A549 (cell line): ENCODE measurements at regions of chr5 and their contacts with region 1.

Region 1: GRCh38 chr5:36270220-36270574 is 28.5 kb upstream of the NADK2 start:
- DNase-seq: no peak
- ATAC-seq: no peak
- H3K4me3 ChIP-seq: no peak overlapping the region
- H3K27ac ChIP-seq: no peak overlapping the region
- H3K4me1 ChIP-seq: no peaks in the 10 kb centered on the region
- CTCF ChIP-seq: no peak
- EP300 ChIP-seq: no peak
- POLR2A ChIP-seq: no peak
- RAD21 ChIP-seq: no peak

Region 2: DNA sequence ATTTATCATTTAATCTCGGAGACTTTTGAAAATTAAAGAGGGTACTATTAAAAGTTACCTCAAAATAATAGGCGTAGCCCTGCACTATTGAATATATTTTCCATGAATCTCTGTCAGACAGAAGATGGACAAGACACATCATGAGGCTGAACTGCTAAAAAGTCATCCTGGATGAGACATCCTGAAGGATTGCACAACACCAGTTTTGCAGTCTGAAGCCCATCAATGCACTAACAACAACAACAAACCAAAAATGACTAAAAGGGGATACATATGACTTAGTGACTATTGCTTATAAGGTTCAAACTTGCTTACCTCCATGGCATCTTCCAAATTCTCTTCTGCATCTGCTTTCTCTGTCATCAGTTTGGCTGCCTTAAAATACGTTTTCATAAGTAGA is 134.2 kb before region 1 on chr5:
- CTCF ChIA-PET with region 1: no interaction called
- POLR2A ChIA-PET with region 1: no interaction called
- DNase-seq: no peak
- ATAC-seq: no peak
- H3K4me3 ChIP-seq: no peak overlapping the region
- H3K27ac ChIP-seq: no peak overlapping the region
- H3K4me1 ChIP-seq: no peaks in the 10 kb centered on the region
- CTCF ChIP-seq: no peak
- EP300 ChIP-seq: no peak
- POLR2A ChIP-seq: no peak
- RAD21 ChIP-seq: no peak

Region 3: DNA sequence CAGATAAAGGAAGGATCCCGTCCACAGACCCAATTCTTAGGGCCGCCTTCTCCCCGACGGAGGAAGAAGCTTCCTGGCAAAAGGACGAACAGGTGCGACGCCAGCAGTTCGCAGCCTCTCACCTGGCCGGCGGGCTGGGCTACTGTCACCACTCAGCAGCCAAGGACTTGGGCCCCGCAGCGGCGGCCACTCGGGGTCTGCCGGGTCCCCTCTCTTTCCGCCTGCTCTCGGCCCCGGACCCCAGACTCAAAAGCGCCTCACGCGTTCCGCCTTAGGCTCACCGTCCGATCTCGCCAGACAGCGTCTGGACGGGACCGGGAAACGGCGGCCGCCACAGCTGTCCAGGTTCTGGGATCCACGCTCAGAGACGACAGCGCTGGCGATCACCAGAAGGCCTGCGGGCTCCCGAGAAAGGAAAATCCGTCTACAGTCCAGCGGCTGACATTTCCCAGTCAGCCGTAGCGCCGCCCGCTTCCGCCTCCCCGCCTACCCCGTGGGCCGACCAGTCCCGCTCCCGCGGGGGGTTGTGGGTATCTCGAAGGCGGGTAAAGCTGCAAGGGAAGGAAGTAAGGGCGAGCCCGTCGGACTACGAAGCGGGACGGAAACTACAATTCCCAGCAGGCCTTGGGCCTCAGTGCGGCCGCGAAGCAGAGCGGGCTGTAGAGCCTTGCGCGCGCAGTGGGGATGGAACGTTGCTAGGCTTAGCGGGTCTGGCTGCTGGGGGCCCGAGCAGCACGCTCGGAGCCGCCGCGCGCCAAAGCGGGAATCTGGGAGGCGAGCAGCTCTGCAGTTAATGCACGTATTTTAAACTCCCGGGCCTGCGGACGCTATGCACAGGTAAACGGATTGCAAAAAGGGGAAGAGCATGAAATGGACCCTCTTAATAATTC is 118.5 kb before region 1 on chr5 and contains the starts of genes LMBRD2 and SKP2:
- CTCF ChIA-PET with region 1: no interaction called
- POLR2A ChIA-PET with region 1: no interaction called
- DNase-seq: peak; percentile 95
- ATAC-seq: peak; percentile 98 to 99
- H3K4me3 ChIP-seq: peak within 1 kb of the TSS; percentile 78
- H3K27ac ChIP-seq: peak within 1 kb of the TSS; percentile 79 to 89
- H3K4me1 ChIP-seq: peaks cover 7% of the 10 kb centered on the region; the same call in 1 of the 3 replicates
- CTCF ChIP-seq: no peak
- EP300 ChIP-seq: no peak
- POLR2A ChIP-seq: peak; percentile 82
- RAD21 ChIP-seq: no peak
- polyA plus RNA-seq, gene LMBRD2: 5.4 and 6.8 TPM in 2 replicates
- polyA plus RNA-seq, gene SKP2: 13.7 and 23.4 TPM in 2 replicates

Region 4: DNA sequence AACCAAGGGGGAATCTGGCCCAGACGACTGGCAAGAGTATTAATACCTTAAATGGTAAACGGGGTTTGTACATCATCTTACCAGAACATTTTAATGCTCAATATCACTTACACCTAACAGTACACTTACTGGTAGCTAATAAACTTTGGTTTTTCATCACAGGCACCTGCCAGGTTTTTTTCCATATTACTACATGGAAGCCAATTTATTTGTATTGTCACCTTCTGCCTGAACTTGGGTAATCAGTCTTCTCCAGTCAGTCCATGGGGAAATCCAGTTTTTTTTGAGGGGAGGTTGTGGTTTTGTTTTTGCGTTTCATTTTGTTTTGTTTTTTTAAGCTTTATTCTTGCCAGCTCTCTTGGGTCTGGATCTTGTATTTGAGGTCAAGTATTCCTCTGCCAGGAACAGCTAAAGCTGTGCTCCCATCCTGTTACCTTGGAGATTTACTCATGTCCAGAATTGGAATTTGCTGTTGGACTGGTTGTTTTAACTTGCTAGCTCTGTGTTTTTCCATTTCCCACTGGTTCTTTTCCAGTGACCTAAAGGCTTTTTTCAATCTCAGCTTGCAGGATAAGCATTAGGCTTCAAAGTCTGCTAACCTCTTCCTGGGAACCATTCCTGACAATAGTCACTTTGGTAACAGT is 17.4 kb before region 1 on chr5:
- CTCF ChIA-PET with region 1: interaction called, 13 read pairs
- POLR2A ChIA-PET with region 1: no interaction called
- DNase-seq: no peak
- ATAC-seq: no peak
- H3K4me3 ChIP-seq: no peak overlapping the region
- H3K27ac ChIP-seq: no peak overlapping the region
- H3K4me1 ChIP-seq: no peaks in the 10 kb centered on the region
- CTCF ChIP-seq: no peak
- EP300 ChIP-seq: no peak
- POLR2A ChIP-seq: no peak
- RAD21 ChIP-seq: no peak

Region 5: DNA sequence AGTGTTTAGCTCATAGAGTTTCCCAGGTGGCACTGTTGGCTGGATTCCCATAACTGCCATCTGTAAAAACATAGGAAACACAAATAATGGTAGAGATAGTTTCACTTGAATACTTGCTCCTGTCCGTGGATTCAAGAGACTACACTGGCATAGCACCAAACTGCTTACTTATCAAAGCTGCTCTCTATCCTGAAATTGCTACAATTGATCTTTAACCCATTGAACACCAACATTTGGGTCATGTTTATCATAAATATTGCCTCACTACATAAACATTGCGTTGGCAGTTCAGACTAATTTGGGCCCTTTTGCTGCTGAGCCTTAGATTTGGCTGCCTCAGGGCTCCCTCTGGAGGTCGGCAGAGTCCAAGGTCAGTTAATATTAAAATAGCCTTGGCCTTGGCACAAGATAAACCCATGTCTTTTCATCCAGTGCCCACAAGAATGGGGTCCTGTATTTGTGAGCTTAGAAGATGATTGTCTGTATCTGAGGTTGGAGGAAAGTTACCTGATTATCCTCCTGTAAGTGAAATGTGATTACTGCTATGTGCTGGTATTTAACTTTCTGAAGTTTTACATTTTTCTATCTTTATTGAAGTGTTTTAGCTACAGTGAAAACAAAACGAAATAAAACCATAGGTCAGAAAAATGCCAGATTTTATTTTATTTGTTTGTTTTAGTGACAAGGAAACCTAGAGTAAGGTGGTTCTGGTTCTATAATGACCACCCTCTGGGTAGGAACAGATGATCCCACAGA is 35.6 kb after region 1 on chr5:
- CTCF ChIA-PET with region 1: interaction called, 10 read pairs
- POLR2A ChIA-PET with region 1: no interaction called
- DNase-seq: peak in 1 of 2 experiments; percentile 36
- ATAC-seq: peak; percentile 80 to 84; a peak in 5 of 6 replicates
- H3K4me3 ChIP-seq: no peak overlapping the region
- H3K27ac ChIP-seq: no peak overlapping the region
- H3K4me1 ChIP-seq: no peaks in the 10 kb centered on the region
- CTCF ChIP-seq: peak; percentile 72
- EP300 ChIP-seq: no peak
- POLR2A ChIP-seq: no peak
- RAD21 ChIP-seq: peak; percentile 71 to 73

Region 6: DNA sequence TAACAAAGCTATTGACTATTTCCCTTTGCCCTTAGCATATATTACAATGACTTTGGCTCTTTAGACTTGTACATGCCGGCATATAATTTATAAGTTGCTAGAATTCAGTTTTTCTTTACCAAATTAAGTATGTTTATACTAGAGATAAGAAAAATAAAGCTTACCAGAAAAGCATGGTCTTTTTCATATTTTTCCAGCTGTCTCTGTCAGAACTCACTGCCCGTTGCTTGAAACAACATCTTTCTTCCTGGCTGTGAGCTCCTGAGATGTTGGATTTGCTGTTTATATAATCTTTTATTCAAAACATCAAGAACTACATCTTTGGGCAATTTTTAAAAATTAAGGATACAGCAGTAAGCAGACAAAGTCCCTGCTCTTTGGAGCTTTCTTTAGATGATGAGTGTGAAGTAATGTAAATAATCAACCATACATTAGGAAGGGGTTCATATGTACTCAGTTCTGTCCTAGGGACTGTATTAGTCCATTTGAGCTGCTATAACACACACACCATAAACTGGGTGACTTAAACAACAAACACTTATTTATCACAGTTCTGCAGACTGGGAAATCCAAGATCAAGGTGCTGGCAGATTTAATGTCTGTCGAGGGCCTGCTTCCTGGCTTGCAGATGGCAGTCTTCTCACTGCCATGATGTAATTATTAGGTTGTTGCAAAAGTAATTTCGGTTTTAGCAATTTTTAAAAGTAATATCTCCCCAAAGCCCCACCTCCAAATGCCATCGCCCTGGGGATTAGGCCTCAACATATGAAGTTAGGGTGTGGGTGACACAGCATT is 76.9 kb after region 1 on chr5:
- CTCF ChIA-PET with region 1: no interaction called
- POLR2A ChIA-PET with region 1: no interaction called
- DNase-seq: no peak
- ATAC-seq: no peak
- H3K4me3 ChIP-seq: no peak overlapping the region
- H3K27ac ChIP-seq: no peak overlapping the region
- H3K4me1 ChIP-seq: no peaks in the 10 kb centered on the region
- CTCF ChIP-seq: no peak
- EP300 ChIP-seq: no peak
- POLR2A ChIP-seq: no peak
- RAD21 ChIP-seq: no peak

Region 7: DNA sequence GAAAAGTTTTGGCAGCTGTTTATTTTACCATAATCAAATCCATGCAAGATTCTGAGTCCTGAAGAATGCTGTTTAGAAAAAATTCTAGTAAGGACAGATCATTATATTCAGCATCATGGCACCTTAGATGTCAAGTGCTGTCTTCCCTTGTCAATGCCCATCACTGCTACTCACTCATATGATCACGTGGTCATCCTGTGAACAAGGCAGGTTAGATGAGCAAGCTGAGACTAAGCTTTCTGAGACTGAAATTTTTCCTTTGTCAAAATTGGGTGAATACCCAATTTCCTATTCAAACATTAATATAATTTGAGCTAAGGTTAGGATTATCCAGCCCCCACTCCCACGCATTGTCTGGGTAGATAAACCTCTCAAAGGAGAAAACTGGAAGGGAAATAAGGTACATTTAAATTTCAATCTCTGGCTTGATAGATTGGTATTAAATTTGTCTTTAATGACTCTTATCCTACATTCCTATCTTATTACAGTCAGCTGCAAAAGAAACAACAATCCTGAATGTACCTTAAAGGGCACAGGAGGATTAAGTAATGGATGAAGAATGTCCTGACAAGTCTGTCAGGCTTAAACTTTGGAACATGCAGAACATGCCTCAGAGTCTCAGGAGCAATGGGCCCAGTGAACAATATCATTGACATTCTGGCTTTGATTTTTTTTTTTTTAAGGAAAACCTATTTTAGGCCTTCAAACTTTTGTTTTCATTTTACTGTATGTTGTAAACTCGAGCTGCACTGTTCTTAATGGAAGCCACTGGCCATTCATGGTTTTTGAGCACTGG is 180.2 kb after region 1 on chr5:
- CTCF ChIA-PET with region 1: no interaction called
- POLR2A ChIA-PET with region 1: no interaction called
- DNase-seq: no peak
- ATAC-seq: no peak
- H3K4me3 ChIP-seq: no peak overlapping the region
- H3K27ac ChIP-seq: no peak overlapping the region
- H3K4me1 ChIP-seq: no peaks in the 10 kb centered on the region
- CTCF ChIP-seq: no peak
- EP300 ChIP-seq: no peak
- POLR2A ChIP-seq: no peak
- RAD21 ChIP-seq: no peak